ENCODE measurements at regions of chr9 and their contacts with region 1.

Region 1: GRCh38 chr9:13228431-13228830 is 51.1 kb downstream of the MPDZ start:
- DNase-seq: no peak
- ATAC-seq: no peak
- H3K4me3 ChIP-seq: no peak overlapping the region
- H3K27ac ChIP-seq: no peak overlapping the region
- H3K4me1 ChIP-seq: no peaks in the 10 kb centered on the region
- H3K27me3 ChIP-seq: no peaks in the 10 kb centered on the region
- CTCF ChIP-seq: no peak
- EP300 ChIP-seq: no peak
- POLR2A ChIP-seq: no peak
- RAD21 ChIP-seq: no peak

Region 2: GRCh38 chr9:13266167-13266566 is 37.7 kb after region 1 on chr9:
- CTCF ChIA-PET with region 1: no interaction called
- POLR2A ChIA-PET with region 1: no interaction called
- in situ Hi-C with region 1: no loop called
- intact Hi-C with region 1: no loop called
- DNase-seq: no peak
- ATAC-seq: no peak
- H3K4me3 ChIP-seq: no peak overlapping the region
- H3K27ac ChIP-seq: no peak overlapping the region
- H3K4me1 ChIP-seq: peaks cover 0 to 3% of the 10 kb centered on the region in 2 experiments; a peak in 2 of 5 replicates
- H3K27me3 ChIP-seq: no peaks in the 10 kb centered on the region
- CTCF ChIP-seq: no peak
- EP300 ChIP-seq: no peak
- POLR2A ChIP-seq: no peak
- RAD21 ChIP-seq: no peak

Region 3: DNA sequence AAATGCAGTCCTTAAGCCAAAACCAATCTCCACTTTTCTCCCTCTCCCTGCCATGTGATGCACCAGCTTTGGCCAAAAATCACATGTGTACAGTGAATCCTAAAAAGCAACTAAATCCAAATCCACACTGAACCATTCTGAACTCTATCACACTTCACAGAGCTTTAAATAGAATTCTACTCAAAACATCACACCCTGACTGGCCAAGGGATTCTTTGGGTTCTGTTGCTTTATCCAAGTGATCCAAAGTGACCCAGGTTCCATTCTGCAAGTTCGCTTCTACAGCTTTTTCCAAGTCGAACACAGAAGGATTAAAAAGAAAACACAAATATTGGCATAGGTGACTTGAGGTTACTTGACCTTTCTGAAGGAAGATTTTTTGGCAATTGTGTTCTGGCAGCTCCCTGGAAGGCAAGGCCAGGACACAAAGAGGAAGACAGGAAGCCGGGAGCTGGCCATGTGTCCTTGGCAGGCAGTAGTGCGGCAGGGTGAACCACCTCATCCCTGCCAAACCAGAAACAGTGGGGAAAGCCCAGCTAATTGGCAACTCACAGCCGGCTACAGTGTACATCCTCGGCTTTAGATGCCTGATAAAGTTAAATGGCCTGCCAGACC is 970.5 kb after region 1 on chr9:
- CTCF ChIA-PET with region 1: no interaction called
- POLR2A ChIA-PET with region 1: no interaction called
- in situ Hi-C with region 1: loop called (anchors 25 kb)
- intact Hi-C with region 1: no loop called
- DNase-seq: no peak
- ATAC-seq: no peak
- H3K4me3 ChIP-seq: no peak overlapping the region
- H3K27ac ChIP-seq: no peak overlapping the region
- H3K4me1 ChIP-seq: no peaks in the 10 kb centered on the region
- H3K27me3 ChIP-seq: no peaks in the 10 kb centered on the region; a peak in 1 of 5 replicates
- CTCF ChIP-seq: no peak
- EP300 ChIP-seq: no peak
- POLR2A ChIP-seq: no peak
- RAD21 ChIP-seq: no peak